AG04450 (cell line): ENCODE measurements at regions of chr10 and their contacts with region 1.

Region 1: DNA sequence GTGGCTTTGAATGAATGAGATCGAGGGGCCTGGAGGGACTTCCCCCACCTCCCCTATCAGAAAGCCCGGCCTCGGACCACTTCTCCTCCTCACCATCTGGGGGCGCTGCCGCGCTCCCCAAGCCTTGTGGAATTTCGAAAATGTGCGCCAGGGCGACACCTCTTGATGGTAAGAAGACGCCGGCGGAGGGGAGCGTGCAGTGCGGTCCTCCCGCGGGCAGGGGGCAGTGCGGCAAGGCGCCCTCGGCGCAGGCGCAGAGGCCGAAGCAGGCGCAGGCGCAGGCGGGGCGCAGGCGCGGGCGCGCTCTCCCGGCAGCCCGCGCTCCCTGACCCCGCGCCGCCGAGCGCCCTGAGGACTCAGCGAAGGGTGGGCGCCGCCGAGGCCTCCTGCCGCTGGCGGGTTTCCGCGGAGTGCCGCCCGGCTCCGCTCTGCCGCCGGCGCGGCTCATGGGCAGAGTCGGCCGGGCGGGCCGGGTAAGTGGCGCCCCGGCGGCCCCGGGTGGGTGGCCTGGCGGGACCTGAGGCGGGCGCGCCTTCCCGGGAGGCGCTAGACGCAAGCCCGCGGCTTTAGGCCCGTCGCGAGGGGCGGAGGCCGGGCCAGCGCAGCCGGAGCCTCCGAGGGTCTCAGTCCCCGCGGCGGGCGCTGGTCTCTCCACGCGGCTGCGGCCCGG is at the start of gene RBM17:
- DNase-seq: peak; percentile 93
- H3K4me3 ChIP-seq: peak within 1 kb of the TSS; percentile 96
- H3K27ac ChIP-seq: peak within 1 kb of the TSS; percentile 47
- H3K27me3 ChIP-seq: no peaks in the 10 kb centered on the region
- CTCF ChIP-seq: peak; percentile 99
- polyA plus RNA-seq, gene RBM17: 38.9 and 45.0 TPM in 2 replicates

Region 2: GRCh38 chr10:6014241-6014761 is 74.6 kb before region 1 on chr10:
- CTCF ChIA-PET with region 1: interaction called, 14 read pairs
- POLR2A ChIA-PET with region 1: no interaction called
- DNase-seq: no peak
- H3K4me3 ChIP-seq: no peak overlapping the region
- H3K27ac ChIP-seq: no peak overlapping the region
- H3K27me3 ChIP-seq: peaks cover 7% of the 10 kb centered on the region
- CTCF ChIP-seq: peak; percentile 79

Region 3: GRCh38 chr10:6072215-6072934 is 16.5 kb before region 1 on chr10:
- CTCF ChIA-PET with region 1: interaction called, 31 read pairs
- POLR2A ChIA-PET with region 1: no interaction called
- DNase-seq: no peak
- H3K4me3 ChIP-seq: no peak overlapping the region
- H3K27ac ChIP-seq: no peak overlapping the region
- H3K27me3 ChIP-seq: peaks cover 26% of the 10 kb centered on the region
- CTCF ChIP-seq: no peak

Region 4: GRCh38 chr10:6195846-6196245 is 107.0 kb after region 1 on chr10:
- CTCF ChIA-PET with region 1: interaction called, 10 read pairs
- POLR2A ChIA-PET with region 1: interaction called, 11 read pairs
- DNase-seq: no peak
- H3K4me3 ChIP-seq: no peak overlapping the region
- H3K27ac ChIP-seq: no peak overlapping the region
- H3K27me3 ChIP-seq: no peaks in the 10 kb centered on the region
- CTCF ChIP-seq: no peak

Region 5: DNA sequence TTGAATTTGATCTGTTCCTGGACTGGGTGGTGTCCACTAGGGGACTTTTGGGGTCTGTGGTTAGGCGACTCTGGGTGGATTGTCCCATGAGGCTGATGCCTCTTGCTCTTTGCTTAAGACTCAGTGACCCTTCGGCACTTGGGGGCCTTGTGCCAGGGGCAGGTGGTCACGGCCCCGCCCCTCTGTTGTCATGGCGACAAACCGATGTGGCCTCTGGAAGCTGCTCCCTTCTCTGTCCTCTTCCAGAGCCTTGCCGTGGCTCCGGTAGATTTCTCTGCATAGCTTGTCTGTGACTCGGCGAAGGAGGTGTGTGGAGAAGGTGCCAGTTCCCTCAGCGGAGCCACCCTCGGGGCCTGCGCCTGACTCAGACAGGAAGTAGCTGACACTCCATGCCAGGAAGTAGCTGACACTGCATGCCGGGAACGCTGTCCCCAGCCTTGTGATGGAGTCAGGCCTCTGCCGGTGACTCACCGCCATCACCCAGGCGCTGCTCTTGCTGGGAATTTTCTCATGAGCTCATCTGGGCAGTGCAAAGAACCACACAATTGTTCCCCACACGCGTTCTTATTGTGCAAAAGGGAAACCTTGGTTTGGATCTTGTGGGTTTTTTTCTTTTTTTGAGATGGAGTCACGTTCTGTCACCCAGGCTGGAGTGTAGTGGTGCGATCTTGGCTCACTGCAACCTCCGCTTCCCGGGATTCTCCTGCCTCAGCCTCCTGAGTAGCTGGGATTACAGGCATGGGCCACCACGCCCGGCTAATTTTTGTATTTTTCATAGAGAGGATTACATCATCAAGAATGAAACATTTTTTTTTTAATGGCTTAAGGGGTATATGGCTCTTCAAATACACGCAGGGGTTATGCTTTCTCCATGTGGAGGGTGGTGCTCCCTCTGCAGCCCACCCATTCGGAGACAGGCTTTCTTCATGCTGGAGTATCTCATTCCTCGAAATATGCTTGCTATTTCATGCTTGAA is 186.5 kb after region 1 on chr10:
- CTCF ChIA-PET with region 1: no interaction called
- POLR2A ChIA-PET with region 1: no interaction called
- DNase-seq: peak; percentile 85
- H3K4me3 ChIP-seq: peak overlapping the region; percentile 31
- H3K27ac ChIP-seq: peak overlapping the region; percentile 93
- H3K27me3 ChIP-seq: no peaks in the 10 kb centered on the region
- CTCF ChIP-seq: peak; percentile 32

Region 6: GRCh38 chr10:6409971-6410651 is 321.3 kb after region 1 on chr10:
- CTCF ChIA-PET with region 1: interaction called, 14 read pairs
- POLR2A ChIA-PET with region 1: no interaction called
- DNase-seq: peak; percentile 50
- H3K4me3 ChIP-seq: no peak overlapping the region
- H3K27ac ChIP-seq: peak overlapping the region; percentile 21
- H3K27me3 ChIP-seq: peaks cover 7% of the 10 kb centered on the region
- CTCF ChIP-seq: no peak